ENCODE measurements at regions of chr1 and their contacts with region 1.

Region 1: GRCh38 chr1:180533266-180533987 is 25.3 kb upstream of the OVAAL start:
- DNase-seq: peak; percentile 36
- ATAC-seq: peak; percentile 71
- H3K4me3 Mint-ChIP-seq: no peak overlapping the region
- H3K27ac Mint-ChIP-seq: no peak overlapping the region
- H3K4me1 Mint-ChIP-seq: peaks cover 5% of the 10 kb centered on the region
- H3K27me3 Mint-ChIP-seq: peaks cover 11% of the 10 kb centered on the region
- CTCF ChIP-seq: peak; percentile 42

Region 2: GRCh38 chr1:180765151-180765550 is 231.7 kb after region 1 on chr1:
- CTCF ChIA-PET with region 1: no interaction called
- POLR2A ChIA-PET with region 1: no interaction called
- intact Hi-C with region 1: no loop called
- DNase-seq: no peak
- ATAC-seq: no peak
- H3K4me3 Mint-ChIP-seq: no peak overlapping the region
- H3K27ac Mint-ChIP-seq: no peak overlapping the region
- H3K4me1 Mint-ChIP-seq: peaks cover 6% of the 10 kb centered on the region
- H3K27me3 Mint-ChIP-seq: no peaks in the 10 kb centered on the region
- CTCF ChIP-seq: no peak

Region 3: DNA sequence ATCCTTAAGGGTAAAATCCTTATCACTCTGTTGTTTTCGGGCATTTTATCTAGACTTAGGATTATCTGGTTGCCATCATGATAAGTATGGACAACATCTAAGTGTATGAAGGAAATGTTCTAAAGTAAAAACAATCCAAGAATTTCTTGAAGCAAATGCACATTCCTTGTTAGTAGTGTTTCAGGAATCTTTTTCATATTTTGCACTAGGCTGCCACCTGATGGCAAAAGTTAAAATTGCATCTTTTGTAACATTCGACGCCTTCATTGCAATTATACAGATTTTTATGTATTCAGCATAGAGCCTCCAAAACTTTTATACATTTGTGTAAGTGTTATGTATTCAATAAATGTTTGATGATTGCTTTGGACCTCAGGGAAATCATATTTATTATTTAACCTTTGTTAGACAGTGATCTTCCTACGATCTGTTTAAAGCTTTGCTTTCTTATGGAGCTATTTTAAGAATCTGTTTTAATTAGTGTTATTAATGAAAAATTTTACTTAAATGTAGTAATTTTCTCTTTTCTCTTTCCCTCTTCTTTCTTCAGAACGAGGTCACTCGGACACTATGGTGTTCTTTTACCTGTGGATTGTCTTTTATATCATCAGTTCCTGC is 329.8 kb after region 1 on chr1:
- CTCF ChIA-PET with region 1: interaction called, 66 read pairs
- POLR2A ChIA-PET with region 1: no interaction called
- intact Hi-C with region 1: loop called (anchors 1 kb)
- DNase-seq: no peak
- ATAC-seq: no peak
- H3K4me3 Mint-ChIP-seq: no peak overlapping the region
- H3K27ac Mint-ChIP-seq: no peak overlapping the region
- H3K4me1 Mint-ChIP-seq: no peaks in the 10 kb centered on the region
- H3K27me3 Mint-ChIP-seq: no peaks in the 10 kb centered on the region
- CTCF ChIP-seq: peak; percentile 92

Region 4: DNA sequence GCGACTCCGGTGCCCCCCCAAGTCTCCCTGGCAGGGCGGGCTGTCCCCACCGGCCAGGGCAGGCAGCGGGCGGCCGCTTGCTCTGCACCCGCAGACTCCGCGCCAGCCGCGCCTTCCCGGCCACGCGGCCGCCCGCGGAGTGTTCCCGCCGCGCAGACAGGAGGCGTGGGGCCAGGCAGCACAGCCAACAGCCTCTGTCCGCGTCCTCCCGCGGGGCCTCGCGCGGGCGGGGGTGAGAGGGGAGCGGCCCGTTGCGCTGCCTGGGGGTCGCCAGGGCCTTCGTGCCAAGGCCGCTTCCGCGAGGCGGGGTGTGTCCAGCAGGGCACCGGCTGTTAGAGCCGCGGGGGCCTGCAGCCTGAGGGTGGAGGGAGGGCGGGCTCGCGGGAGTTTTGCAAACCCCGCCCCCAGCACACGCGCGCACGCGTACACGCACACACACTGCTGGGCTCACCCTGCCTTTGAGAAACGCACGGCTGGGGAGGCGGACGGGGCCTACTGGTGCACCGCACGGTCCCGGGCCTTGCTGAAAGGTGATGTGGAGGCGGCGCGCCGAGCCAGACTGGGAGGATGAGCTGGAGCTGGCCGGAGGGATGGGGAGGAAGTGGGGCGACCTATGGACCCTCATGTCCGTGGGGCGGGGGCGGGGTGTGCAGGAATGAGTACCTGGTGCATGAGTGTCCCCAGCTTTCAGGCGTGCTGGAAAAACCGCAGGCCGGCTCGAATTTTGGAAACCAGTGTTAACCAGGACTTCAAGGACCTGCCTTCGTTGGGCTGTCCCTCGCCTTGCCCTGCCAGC is 420.8 kb after region 1 on chr1:
- CTCF ChIA-PET with region 1: no interaction called
- POLR2A ChIA-PET with region 1: no interaction called
- intact Hi-C with region 1: no loop called
- DNase-seq: peak; percentile 46
- ATAC-seq: peak; percentile 89
- H3K4me3 Mint-ChIP-seq: peak overlapping the region; percentile 68
- H3K27ac Mint-ChIP-seq: no peak overlapping the region
- H3K4me1 Mint-ChIP-seq: peaks cover 3% of the 10 kb centered on the region
- H3K27me3 Mint-ChIP-seq: no peaks in the 10 kb centered on the region
- CTCF ChIP-seq: no peak

Region 5: GRCh38 chr1:181044449-181044966 is 511.1 kb after region 1 on chr1:
- CTCF ChIA-PET with region 1: no interaction called
- POLR2A ChIA-PET with region 1: interaction called, 11 read pairs
- intact Hi-C with region 1: no loop called
- DNase-seq: no peak
- ATAC-seq: peak; percentile 62
- H3K4me3 Mint-ChIP-seq: no peak overlapping the region
- H3K27ac Mint-ChIP-seq: peak overlapping the region; percentile 36
- H3K4me1 Mint-ChIP-seq: peaks cover 36% of the 10 kb centered on the region
- H3K27me3 Mint-ChIP-seq: no peaks in the 10 kb centered on the region
- CTCF ChIP-seq: no peak

Region 6: GRCh38 chr1:181152892-181153633 is 619.6 kb after region 1 on chr1:
- CTCF ChIA-PET with region 1: no interaction called
- POLR2A ChIA-PET with region 1: no interaction called
- intact Hi-C with region 1: loop called (anchors 5 kb)
- DNase-seq: peak; percentile 48
- ATAC-seq: peak; percentile 86
- H3K4me3 Mint-ChIP-seq: peak overlapping the region; percentile 71
- H3K27ac Mint-ChIP-seq: peak overlapping the region; percentile 64
- H3K4me1 Mint-ChIP-seq: peaks cover 48% of the 10 kb centered on the region
- H3K27me3 Mint-ChIP-seq: no peaks in the 10 kb centered on the region
- CTCF ChIP-seq: no peak